BJ (cell line): ENCODE measurements at regions of chr2 and their contacts with region 1.

Region 1: GRCh38 chr2:152036611-152037469 is 62.0 kb downstream of the CACNB4 start:
- DNase-seq: no peak
- H3K4me3 ChIP-seq: no peak overlapping the region
- H3K27me3 ChIP-seq: peaks cover 6% of the 10 kb centered on the region
- CTCF ChIP-seq: peak; percentile 80

Region 2: GRCh38 chr2:151905963-151906632 is 130.7 kb before region 1 on chr2:
- CTCF ChIA-PET with region 1: no interaction called
- POLR2A ChIA-PET with region 1: no interaction called
- DNase-seq: no peak
- H3K4me3 ChIP-seq: no peak overlapping the region
- H3K27me3 ChIP-seq: no peaks in the 10 kb centered on the region; the same call in 1 of the 2 replicates
- CTCF ChIP-seq: no peak

Region 3: GRCh38 chr2:151971301-151972051 is 65.4 kb before region 1 on chr2:
- CTCF ChIA-PET with region 1: no interaction called
- POLR2A ChIA-PET with region 1: no interaction called
- DNase-seq: no peak
- H3K4me3 ChIP-seq: no peak overlapping the region
- H3K27me3 ChIP-seq: no peaks in the 10 kb centered on the region
- CTCF ChIP-seq: no peak

Region 4: DNA sequence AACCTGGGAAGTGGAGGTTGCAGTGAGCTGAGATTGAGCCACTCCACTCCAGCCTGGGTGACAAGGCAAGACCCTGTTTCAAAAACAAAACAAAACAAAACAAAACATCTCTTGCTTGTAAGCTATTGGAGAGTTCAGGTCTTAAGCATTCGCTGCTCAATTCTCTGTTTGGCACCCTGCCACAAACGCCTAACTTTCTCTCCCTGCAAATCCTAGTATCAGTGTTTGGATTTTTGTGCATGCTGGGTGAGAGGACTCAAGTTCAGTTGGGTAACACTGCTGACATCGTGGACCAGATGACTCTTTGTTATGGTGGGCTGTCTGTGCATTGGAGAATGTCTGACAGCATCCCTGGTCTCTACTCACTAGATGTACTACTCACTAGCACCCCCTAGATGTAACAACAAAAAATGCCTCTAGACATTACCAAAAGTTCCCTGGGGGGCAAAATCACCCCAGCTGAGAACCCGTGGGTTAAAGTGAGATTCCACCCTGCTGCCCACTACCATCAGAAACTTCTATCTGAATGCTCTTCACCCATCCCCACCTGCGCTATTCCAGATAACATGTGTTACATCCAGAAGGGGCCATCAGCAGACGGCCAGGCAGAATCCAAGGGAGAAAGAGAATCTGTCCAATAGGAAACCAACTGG is 11.1 kb after region 1 on chr2:
- CTCF ChIA-PET with region 1: interaction called, 28 read pairs
- POLR2A ChIA-PET with region 1: no interaction called
- DNase-seq: no peak
- H3K4me3 ChIP-seq: no peak overlapping the region
- H3K27me3 ChIP-seq: peaks cover 8% of the 10 kb centered on the region
- CTCF ChIP-seq: peak; percentile 29